Naive thymus-derived CD4-positive, alpha-beta T cell (primary cell): ENCODE measurements at regions of chr1 and their contacts with region 1.

Region 1: DNA sequence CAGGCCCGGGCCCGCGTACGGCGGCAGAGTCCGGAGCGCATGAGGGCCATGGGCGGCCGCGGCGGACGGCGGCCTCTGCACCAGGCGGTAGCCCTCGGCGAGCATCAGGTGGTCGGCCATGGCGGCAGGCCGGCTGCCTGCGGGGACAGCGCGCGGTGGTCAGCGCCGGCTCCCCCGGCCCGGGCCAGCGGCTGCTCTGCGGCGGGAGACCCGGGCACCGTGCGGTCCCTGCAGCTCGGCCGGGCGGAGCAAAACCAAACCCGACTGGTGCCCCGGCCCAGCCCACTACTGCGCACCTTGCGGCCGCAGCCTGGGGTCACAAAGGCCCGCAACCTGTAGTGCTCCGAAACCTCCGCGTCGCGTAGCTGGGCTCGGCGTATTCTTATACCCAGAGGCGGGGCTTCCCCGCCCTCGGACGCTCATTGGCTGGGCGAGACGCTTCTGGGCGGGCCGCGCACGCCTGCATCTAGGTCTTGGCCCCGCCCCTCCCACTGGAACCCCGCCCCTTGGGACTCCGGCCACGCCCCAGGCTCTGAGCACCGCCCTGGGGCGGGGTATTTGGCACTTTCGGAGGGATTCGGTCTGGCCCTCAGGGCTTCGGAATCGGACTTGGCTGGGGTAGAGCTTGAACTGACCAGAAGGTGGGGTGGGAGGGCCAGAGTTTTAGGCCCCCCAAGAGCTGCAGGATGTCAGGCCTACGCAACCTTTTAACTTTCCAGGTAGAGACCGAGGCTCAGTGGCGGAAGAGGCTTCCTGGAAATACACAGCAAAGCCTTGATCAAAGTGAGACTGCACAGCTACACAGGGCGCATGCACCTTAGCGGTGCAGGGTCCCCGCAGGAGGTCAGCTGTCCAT is at the start of gene CITED4:
- DNase-seq: peak; percentile 91 to 96 (median 95)
- ATAC-seq: peak; percentile 98
- H3K4me3 ChIP-seq: peak within 1 kb of the TSS; percentile 70
- H3K4me3 Mint-ChIP-seq: peak within 1 kb of the TSS; percentile 93 to 100 (median 96)
- H3K27ac ChIP-seq: peak within 1 kb of the TSS; percentile 73
- H3K27ac Mint-ChIP-seq: peak within 1 kb of the TSS; percentile 96 to 99 (median 99)
- H3K4me1 ChIP-seq: peaks cover 10 to 12% of the 10 kb centered on the region in 2 donors
- H3K4me1 Mint-ChIP-seq: peaks cover 11 to 31% (median 13%) of the 10 kb centered on the region in 7 donors
- H3K27me3 ChIP-seq: no peaks in the 10 kb centered on the region
- H3K27me3 Mint-ChIP-seq: peaks cover 0 to 26% (median 0%) of the 10 kb centered on the region in 5 donors
- total RNA-seq, gene CITED4: 20.5 to 42.8 (median 21.5) TPM

Region 2: GRCh38 chr1:40040511-40041465 is 821.4 kb before region 1 on chr1 and contains the start of gene CAP1:
- CTCF ChIA-PET with region 1: no interaction called
- POLR2A ChIA-PET with region 1: no interaction called
- intact Hi-C with region 1: loop called in 1 of 2 experiments (anchors 1 kb)
- DNase-seq: peak; percentile 99 to 100 (median 100)
- ATAC-seq: peak; percentile 97
- H3K4me3 ChIP-seq: peak within 1 kb of the TSS; percentile 99
- H3K4me3 Mint-ChIP-seq: peak within 1 kb of the TSS; percentile 90 to 99 (median 98)
- H3K27ac ChIP-seq: peak within 1 kb of the TSS; percentile 91
- H3K27ac Mint-ChIP-seq: peak within 1 kb of the TSS; percentile 85 to 99 (median 97)
- H3K4me1 ChIP-seq: peaks cover 49 to 51% of the 10 kb centered on the region in 2 donors
- H3K4me1 Mint-ChIP-seq: peaks cover 54 to 82% (median 72%) of the 10 kb centered on the region in 7 donors
- H3K27me3 ChIP-seq: no peaks in the 10 kb centered on the region
- H3K27me3 Mint-ChIP-seq: no peaks in the 10 kb centered on the region
- total RNA-seq, gene CAP1: 176 to 683 (median 282) TPM

Region 3: GRCh38 chr1:40668769-40669525 is 193.3 kb before region 1 on chr1:
- CTCF ChIA-PET with region 1: no interaction called
- POLR2A ChIA-PET with region 1: no interaction called
- intact Hi-C with region 1: loop called in 1 of 2 experiments (anchors 1 kb)
- DNase-seq: peak; percentile 58 to 84 (median 73)
- ATAC-seq: peak; percentile 82
- H3K4me3 ChIP-seq: peak overlapping the region; percentile 35
- H3K4me3 Mint-ChIP-seq: peak overlapping the region in 8 of 10 donors; percentile 36 to 68 (median 54)
- H3K27ac ChIP-seq: no peak overlapping the region
- H3K27ac Mint-ChIP-seq: no peak overlapping the region
- H3K4me1 ChIP-seq: peaks cover 9 to 13% of the 10 kb centered on the region in 2 donors
- H3K4me1 Mint-ChIP-seq: peaks cover 8 to 22% (median 17%) of the 10 kb centered on the region in 7 donors
- H3K27me3 ChIP-seq: no peaks in the 10 kb centered on the region
- H3K27me3 Mint-ChIP-seq: peaks cover 0 to 16% (median 0%) of the 10 kb centered on the region in 5 donors

Region 4: DNA sequence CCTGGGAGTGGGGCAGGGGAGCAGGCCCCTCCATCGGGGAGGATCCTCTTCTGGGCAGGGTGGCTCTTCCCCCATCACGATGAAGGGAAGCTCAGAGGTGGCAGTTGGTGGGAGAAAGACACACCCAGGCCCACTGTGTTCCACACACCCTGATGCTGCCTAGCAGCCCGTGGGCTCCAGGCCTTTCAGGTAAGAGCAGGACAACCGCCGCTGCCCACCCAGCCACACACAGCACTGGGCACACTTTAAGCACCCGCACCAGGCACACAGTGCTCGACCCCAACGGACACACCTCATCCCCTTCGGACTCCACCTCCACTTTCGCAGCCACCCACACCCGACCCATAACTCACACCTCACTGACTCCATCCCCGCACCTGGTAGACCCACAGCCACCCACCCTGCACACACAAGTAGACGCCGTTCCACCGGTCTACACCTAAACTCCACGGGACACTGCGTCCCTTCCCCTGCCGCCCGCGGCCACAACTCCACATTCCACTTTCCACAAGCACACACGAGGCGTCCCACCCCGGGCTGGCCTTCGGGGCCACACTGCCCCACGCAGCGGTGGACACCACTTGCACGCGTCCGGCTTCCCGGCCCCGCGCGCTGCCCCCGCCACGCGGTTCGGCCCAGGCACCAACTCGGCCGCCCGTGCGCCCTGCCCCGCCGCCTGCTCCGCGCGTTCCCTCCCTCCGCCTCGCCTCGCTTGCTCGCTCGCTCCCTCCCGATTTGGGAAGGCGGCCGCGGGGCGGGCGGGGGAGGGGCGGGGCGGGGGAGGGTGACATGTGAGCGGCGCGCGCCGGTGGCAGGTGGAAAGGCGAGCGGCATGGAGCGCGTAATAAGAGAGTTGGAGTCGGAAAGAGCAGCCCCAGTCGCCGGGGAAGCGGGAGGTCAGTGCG is 79.0 kb before region 1 on chr1 and contains the start of gene KCNQ4:
- CTCF ChIA-PET with region 1: no interaction called
- POLR2A ChIA-PET with region 1: no interaction called
- intact Hi-C with region 1: no loop called
- DNase-seq: peak in 2 of 9 donors; percentile 4 to 49
- ATAC-seq: peak; percentile 34
- H3K4me3 ChIP-seq: no peak within 1 kb of the TSS
- H3K4me3 Mint-ChIP-seq: peak within 1 kb of the TSS; percentile 67 to 89 (median 80)
- H3K27ac ChIP-seq: no peak within 1 kb of the TSS
- H3K27ac Mint-ChIP-seq: peak within 1 kb of the TSS in 4 of 9 donors; percentile 45 to 82 (median 62)
- H3K4me1 ChIP-seq: peaks cover 0 to 5% of the 10 kb centered on the region in 2 donors
- H3K4me1 Mint-ChIP-seq: peaks cover 0 to 19% (median 6%) of the 10 kb centered on the region in 7 donors
- H3K27me3 ChIP-seq: peaks cover 0 to 8% of the 10 kb centered on the region in 2 donors
- H3K27me3 Mint-ChIP-seq: peaks cover 14 to 37% (median 30%) of the 10 kb centered on the region in 5 donors
- total RNA-seq, gene KCNQ4: 0.13 to 0.97 (median 0.24) TPM

Region 5: GRCh38 chr1:40802078-40802741 is 60.0 kb before region 1 on chr1:
- CTCF ChIA-PET with region 1: no interaction called
- POLR2A ChIA-PET with region 1: interaction called, 17 read pairs
- intact Hi-C with region 1: loop called (anchors 1 kb)
- DNase-seq: peak; percentile 76 to 87 (median 84)
- ATAC-seq: peak; percentile 98
- H3K4me3 ChIP-seq: peak overlapping the region; percentile 65
- H3K4me3 Mint-ChIP-seq: peak overlapping the region; percentile 70 to 89 (median 78)
- H3K27ac ChIP-seq: peak overlapping the region; percentile 77
- H3K27ac Mint-ChIP-seq: peak overlapping the region; percentile 69 to 92 (median 87)
- H3K4me1 ChIP-seq: peaks cover 16 to 21% of the 10 kb centered on the region in 2 donors
- H3K4me1 Mint-ChIP-seq: peaks cover 15 to 41% (median 31%) of the 10 kb centered on the region in 7 donors
- H3K27me3 ChIP-seq: no peaks in the 10 kb centered on the region
- H3K27me3 Mint-ChIP-seq: peaks cover 0 to 2% (median 0%) of the 10 kb centered on the region in 5 donors

Region 6: DNA sequence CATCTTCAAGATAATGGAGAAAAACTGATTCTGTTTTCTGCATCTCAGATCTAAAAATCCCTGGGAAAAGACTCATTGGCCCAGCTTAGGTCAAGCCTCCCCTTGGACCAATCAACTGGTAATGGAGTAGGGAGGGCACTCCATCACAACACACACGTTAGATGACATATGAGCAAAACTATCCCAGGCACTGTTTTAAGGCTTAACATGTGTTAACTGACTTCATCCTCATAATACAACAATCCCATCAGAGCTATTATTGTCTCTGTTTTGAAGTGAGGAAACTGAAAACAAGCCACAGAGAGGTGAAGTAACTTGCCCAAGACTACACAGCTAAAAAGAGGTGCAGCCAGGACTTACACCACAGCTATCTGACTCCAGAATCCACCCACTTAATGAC is 14.7 kb after region 1 on chr1:
- CTCF ChIA-PET with region 1: interaction called, 6 read pairs
- POLR2A ChIA-PET with region 1: interaction called, 12 read pairs
- intact Hi-C with region 1: no loop called
- DNase-seq: no peak
- ATAC-seq: no peak
- H3K4me3 ChIP-seq: no peak overlapping the region
- H3K4me3 Mint-ChIP-seq: peak overlapping the region in 1 of 10 donors; percentile 14
- H3K27ac ChIP-seq: no peak overlapping the region
- H3K27ac Mint-ChIP-seq: peak overlapping the region in 3 of 9 donors; percentile 28 to 59 (median 49)
- H3K4me1 ChIP-seq: peaks cover 5 to 21% of the 10 kb centered on the region in 2 donors
- H3K4me1 Mint-ChIP-seq: peaks cover 4 to 49% (median 10%) of the 10 kb centered on the region in 7 donors
- H3K27me3 ChIP-seq: no peaks in the 10 kb centered on the region
- H3K27me3 Mint-ChIP-seq: peaks cover 0 to 5% (median 4%) of the 10 kb centered on the region in 5 donors

Region 7: DNA sequence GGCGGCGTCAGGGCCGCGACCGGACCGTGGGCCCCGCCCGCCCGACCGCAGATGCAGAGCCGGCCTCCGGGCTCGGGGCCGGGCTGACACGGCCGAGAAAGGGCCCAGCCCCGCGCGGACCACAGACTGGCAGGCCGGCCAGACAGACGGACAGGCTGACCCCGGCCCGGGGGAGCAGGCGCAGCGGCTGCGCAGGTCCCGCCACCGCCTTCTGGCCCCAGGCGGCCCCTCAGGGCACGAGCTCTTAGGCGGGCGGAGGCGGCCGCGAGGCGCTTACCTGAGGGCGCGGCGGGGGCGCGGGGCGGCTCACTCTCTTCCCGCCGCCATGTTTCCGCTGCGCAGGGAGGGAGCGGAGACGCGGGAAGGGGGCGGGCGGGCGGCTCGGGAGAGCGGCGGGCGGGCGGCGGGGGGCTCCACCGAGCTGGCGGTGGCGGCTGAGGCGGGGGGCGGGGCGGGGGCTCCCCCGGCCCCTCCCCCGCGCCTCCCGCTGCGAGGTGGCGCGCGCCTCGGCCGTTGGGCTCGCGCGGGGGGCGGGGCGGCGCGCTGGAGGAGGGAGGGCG is 379.6 kb after region 1 on chr1 and contains the start of gene SCMH1:
- CTCF ChIA-PET with region 1: no interaction called
- POLR2A ChIA-PET with region 1: interaction called, 3 read pairs
- intact Hi-C with region 1: loop called (anchors 5 to 10 kb)
- DNase-seq: peak; percentile 31 to 67 (median 55)
- ATAC-seq: peak; percentile 77
- H3K4me3 ChIP-seq: peak within 1 kb of the TSS; percentile 57
- H3K4me3 Mint-ChIP-seq: peak within 1 kb of the TSS; percentile 76 to 92 (median 89)
- H3K27ac ChIP-seq: peak within 1 kb of the TSS; percentile 69
- H3K27ac Mint-ChIP-seq: peak within 1 kb of the TSS; percentile 75 to 94 (median 89)
- H3K4me1 ChIP-seq: peaks cover 10 to 13% of the 10 kb centered on the region in 2 donors
- H3K4me1 Mint-ChIP-seq: peaks cover 7 to 35% (median 27%) of the 10 kb centered on the region in 7 donors
- H3K27me3 ChIP-seq: no peaks in the 10 kb centered on the region
- H3K27me3 Mint-ChIP-seq: peaks cover 0 to 5% (median 0%) of the 10 kb centered on the region in 5 donors
- total RNA-seq, gene SCMH1: 16.7 to 18.6 (median 18.2) TPM

Region 8: GRCh38 chr1:42816585-42817434 is 1954.6 kb after region 1 on chr1 and contains the starts of genes ERMAP and SVBP:
- CTCF ChIA-PET with region 1: no interaction called
- POLR2A ChIA-PET with region 1: no interaction called
- intact Hi-C with region 1: loop called in 1 of 2 experiments (anchors 5 kb)
- DNase-seq: peak; percentile 86 to 98 (median 91)
- ATAC-seq: peak; percentile 97
- H3K4me3 ChIP-seq: peak within 1 kb of the TSS; percentile 69
- H3K4me3 Mint-ChIP-seq: peak within 1 kb of the TSS; percentile 76 to 90 (median 84)
- H3K27ac ChIP-seq: peak within 1 kb of the TSS; percentile 89
- H3K27ac Mint-ChIP-seq: peak within 1 kb of the TSS; percentile 64 to 94 (median 86)
- H3K4me1 ChIP-seq: peaks cover 6 to 10% of the 10 kb centered on the region in 2 donors
- H3K4me1 Mint-ChIP-seq: peaks cover 19 to 35% (median 29%) of the 10 kb centered on the region in 7 donors
- H3K27me3 ChIP-seq: no peaks in the 10 kb centered on the region
- H3K27me3 Mint-ChIP-seq: peaks cover 0 to 10% (median 0%) of the 10 kb centered on the region in 5 donors
- total RNA-seq, gene ERMAP: 6.1 to 10.3 (median 6.7) TPM
- total RNA-seq, gene SVBP: 12.7 to 22.2 (median 17.8) TPM